ENCODE measurements at regions of chr1 and their contacts with region 1.

Region 1: GRCh38 chr1:219876798-219877209 is 51.6 kb downstream of the SLC30A10 start:
- DNase-seq: peak; percentile 23 to 85 (median 54)
- ATAC-seq: peak; percentile 87
- H3K4me3 ChIP-seq: no peak overlapping the region
- H3K27ac ChIP-seq: 0 out of 3 replicates have a peak overlapping the region, but pooled peaks have one; percentile 4
- H3K4me1 ChIP-seq: peaks cover 0 to 20% of the 10 kb centered on the region in 2 experiments; a peak in 2 of 5 replicates
- H3K27me3 ChIP-seq: no peaks in the 10 kb centered on the region
- CTCF ChIP-seq: peak; percentile 77 to 91 (median 78)
- EP300 ChIP-seq: peak; percentile 19; the same call in 1 of the 2 replicates
- POLR2A ChIP-seq: no peak
- RAD21 ChIP-seq: peak; percentile 94 to 96

Region 2: GRCh38 chr1:219837274-219837993 is 39.4 kb before region 1 on chr1:
- CTCF ChIA-PET with region 1: no interaction called
- POLR2A ChIA-PET with region 1: no interaction called
- in situ Hi-C with region 1: no loop called
- intact Hi-C with region 1: no loop called
- DNase-seq: peak; percentile 57 to 87 (median 66)
- ATAC-seq: peak; percentile 95
- H3K4me3 ChIP-seq: no peak overlapping the region
- H3K27ac ChIP-seq: no peak overlapping the region
- H3K4me1 ChIP-seq: peaks cover 6 to 9% of the 10 kb centered on the region in 2 experiments
- H3K27me3 ChIP-seq: peaks cover 10 to 11% of the 10 kb centered on the region in 2 experiments; a peak in 4 of 5 replicates
- CTCF ChIP-seq: peak; percentile 69 to 91 (median 89)
- EP300 ChIP-seq: no peak
- POLR2A ChIP-seq: no peak
- RAD21 ChIP-seq: peak; percentile 93 to 97

Region 3: DNA sequence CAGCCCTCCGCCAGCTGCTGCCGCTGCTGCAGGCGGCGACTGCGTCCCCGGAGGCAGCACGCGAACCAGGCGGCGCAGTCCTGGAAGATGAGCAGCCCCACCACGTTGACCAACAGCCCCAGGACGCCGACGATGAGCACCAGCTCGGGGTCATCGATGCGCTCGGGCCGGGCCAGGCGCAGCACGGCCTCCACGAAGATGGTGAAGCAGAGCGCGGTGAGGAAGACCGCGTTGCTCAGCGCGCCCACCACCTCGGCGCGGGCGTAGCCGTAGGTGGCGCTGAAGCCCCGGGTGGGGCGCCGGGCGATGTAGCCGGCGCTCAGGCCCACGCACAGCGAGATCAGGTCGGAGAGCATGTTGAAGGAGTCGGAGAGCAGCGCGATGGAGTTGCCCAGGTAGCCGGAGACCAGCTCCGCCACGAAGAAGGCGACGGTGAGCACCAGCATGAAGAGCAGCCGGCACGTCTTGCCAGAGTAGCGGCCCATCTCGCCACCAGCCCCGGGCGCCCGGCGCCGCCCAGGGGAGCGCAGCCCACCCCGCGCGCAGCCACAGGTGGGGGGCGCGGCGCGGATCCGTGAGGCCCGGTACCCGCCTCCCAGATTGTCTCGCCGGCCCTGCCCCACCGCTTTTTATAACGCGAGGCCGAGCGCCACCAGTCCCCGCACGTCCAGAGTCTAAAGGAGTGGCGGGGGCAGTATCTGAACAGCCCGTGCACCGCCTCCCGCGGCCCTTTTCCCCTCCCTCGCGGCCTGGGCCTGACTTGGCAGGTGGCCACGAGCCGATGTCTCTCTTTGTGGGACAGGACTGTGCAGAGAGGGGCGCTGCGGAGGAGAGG is 51.4 kb after region 1 on chr1 and contains the start of gene SLC30A10:
- CTCF ChIA-PET with region 1: no interaction called
- POLR2A ChIA-PET with region 1: no interaction called
- in situ Hi-C with region 1: no loop called
- intact Hi-C with region 1: loop called (anchors 2 kb)
- DNase-seq: peak; percentile 82 to 90 (median 87)
- ATAC-seq: peak; percentile 88
- H3K4me3 ChIP-seq: peak within 1 kb of the TSS; percentile 66
- H3K27ac ChIP-seq: peak within 1 kb of the TSS; percentile 57
- H3K4me1 ChIP-seq: peaks cover 25 to 26% of the 10 kb centered on the region in 2 experiments; a peak in 4 of 5 replicates
- H3K27me3 ChIP-seq: no peaks in the 10 kb centered on the region
- CTCF ChIP-seq: peak; percentile 36 to 37 (median 36); a peak in 4 of 6 replicates
- EP300 ChIP-seq: no peak
- POLR2A ChIP-seq: peak; percentile 54; the same call in 1 of the 2 replicates
- RAD21 ChIP-seq: peak in 1 of 2 experiments; percentile 38; a peak in 2 of 4 replicates
- polyA plus RNA-seq, gene SLC30A10: 2.6 to 3.8 TPM

Region 4: GRCh38 chr1:219973213-219973612 is 96.4 kb after region 1 on chr1:
- CTCF ChIA-PET with region 1: no interaction called
- POLR2A ChIA-PET with region 1: interaction called, 4 read pairs
- in situ Hi-C with region 1: loop called (anchors 10 kb)
- intact Hi-C with region 1: loop called (anchors 2 kb)
- DNase-seq: peak in 1 of 4 experiments; percentile 69
- ATAC-seq: peak; percentile 57
- H3K4me3 ChIP-seq: no peak overlapping the region
- H3K27ac ChIP-seq: peak overlapping the region; percentile 27; the same call in 1 of the 3 replicates
- H3K4me1 ChIP-seq: peaks cover 4 to 5% of the 10 kb centered on the region in 2 experiments; a peak in 4 of 5 replicates
- H3K27me3 ChIP-seq: no peaks in the 10 kb centered on the region
- CTCF ChIP-seq: no peak
- EP300 ChIP-seq: no peak
- POLR2A ChIP-seq: no peak
- RAD21 ChIP-seq: no peak

Region 5: GRCh38 chr1:220089650-220090556 is 213.1 kb after region 1 on chr1 and contains the start of gene BPNT1:
- CTCF ChIA-PET with region 1: no interaction called
- POLR2A ChIA-PET with region 1: no interaction called
- in situ Hi-C with region 1: no loop called
- intact Hi-C with region 1: loop called (anchors 2 kb)
- DNase-seq: peak; percentile 90 to 98 (median 91)
- ATAC-seq: peak; percentile 79
- H3K4me3 ChIP-seq: peak within 1 kb of the TSS; percentile 50
- H3K27ac ChIP-seq: peak within 1 kb of the TSS; percentile 13; the same call in 2 of the 3 replicates
- H3K4me1 ChIP-seq: peaks cover 9 to 18% of the 10 kb centered on the region in 2 experiments; a peak in 4 of 5 replicates
- H3K27me3 ChIP-seq: no peaks in the 10 kb centered on the region
- CTCF ChIP-seq: peak in 1 of 3 experiments; percentile 30; a peak in 1 of 6 replicates
- EP300 ChIP-seq: peak; percentile 64
- POLR2A ChIP-seq: peak; percentile 75
- RAD21 ChIP-seq: no peak
- polyA plus RNA-seq, gene BPNT1: 30.2 to 52.9 TPM